ENCODE measurements at regions of chr15 and their contacts with region 1.

Region 1: GRCh38 chr15:94670438-94671034 is 439.2 kb downstream of the MCTP2 start:
- DNase-seq: peak in 1 of 2 donors; percentile 13
- ATAC-seq: peak in 5 of 8 donors; percentile 41 to 63 (median 54)
- H3K4me3 ChIP-seq: no peak overlapping the region
- H3K27ac ChIP-seq: peak overlapping the region in 4 of 10 donors; percentile 5 to 70 (median 29)
- H3K4me1 ChIP-seq: peaks cover 0 to 20% (median 8%) of the 10 kb centered on the region in 9 donors
- H3K27me3 ChIP-seq: peaks cover 0 to 5% (median 0%) of the 10 kb centered on the region in 7 donors
- CTCF ChIP-seq: peak; percentile 54 to 86 (median 76)

Region 2: GRCh38 chr15:94306700-94307650 is 363.6 kb before region 1 on chr15:
- intact Hi-C with region 1: no loop called
- DNase-seq: no peak
- ATAC-seq: peak in 1 of 8 donors; percentile 45
- H3K4me3 ChIP-seq: no peak overlapping the region
- H3K27ac ChIP-seq: peak overlapping the region in 1 of 10 donors; percentile 64
- H3K4me1 ChIP-seq: peaks cover 0 to 26% (median 0%) of the 10 kb centered on the region in 9 donors
- H3K27me3 ChIP-seq: peaks cover 0 to 11% (median 4%) of the 10 kb centered on the region in 7 donors
- CTCF ChIP-seq: no peak

Region 3: GRCh38 chr15:94610069-94610468 is 60.5 kb before region 1 on chr15:
- intact Hi-C with region 1: no loop called
- DNase-seq: no peak
- ATAC-seq: no peak
- H3K4me3 ChIP-seq: no peak overlapping the region
- H3K27ac ChIP-seq: no peak overlapping the region
- H3K4me1 ChIP-seq: peaks cover 0 to 23% (median 16%) of the 10 kb centered on the region in 9 donors
- H3K27me3 ChIP-seq: peaks cover 0 to 6% (median 0%) of the 10 kb centered on the region in 7 donors
- CTCF ChIP-seq: no peak

Region 4: DNA sequence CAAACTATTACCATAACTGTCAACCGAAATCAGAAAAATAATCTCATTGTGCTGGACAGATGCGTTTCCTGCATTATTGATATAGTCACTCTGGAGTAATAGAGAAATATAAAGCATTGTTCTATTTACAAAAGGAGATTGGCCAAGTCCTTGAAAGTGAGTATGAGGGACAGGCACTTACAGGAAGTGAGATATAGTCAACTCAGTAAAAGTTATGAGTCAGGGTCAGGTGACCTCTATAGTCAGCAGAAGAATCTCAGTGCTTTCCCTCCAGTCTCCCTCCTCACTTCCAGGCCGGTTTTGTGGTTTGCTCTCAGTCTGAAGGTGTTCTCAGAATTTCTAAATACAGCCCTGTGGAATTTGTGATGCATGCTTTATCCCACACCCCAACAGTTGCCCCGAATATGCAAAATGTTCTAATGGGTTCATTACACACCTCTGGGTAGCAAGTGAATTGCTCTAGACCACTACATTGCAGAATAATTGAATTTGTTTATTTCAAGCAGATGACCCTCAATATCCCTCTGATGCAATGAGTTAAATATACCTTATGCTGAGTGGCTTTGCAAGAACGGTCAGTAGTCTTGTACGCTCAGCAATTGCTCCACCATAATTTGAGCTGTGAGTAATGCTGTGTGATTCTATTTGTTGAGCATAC is 348.5 kb after region 1 on chr15:
- intact Hi-C with region 1: loop called in 4 of 10 experiments (anchors 5 to 10 kb)
- DNase-seq: no peak
- ATAC-seq: peak in 6 of 8 donors; percentile 14 to 85 (median 77)
- H3K4me3 ChIP-seq: no peak overlapping the region
- H3K27ac ChIP-seq: peak overlapping the region in 3 of 10 donors; percentile 28 to 45 (median 42)
- H3K4me1 ChIP-seq: peaks cover 0 to 35% (median 23%) of the 10 kb centered on the region in 9 donors
- H3K27me3 ChIP-seq: no peaks in the 10 kb centered on the region
- CTCF ChIP-seq: no peak

Region 5: GRCh38 chr15:95051861-95052260 is 381.3 kb after region 1 on chr15:
- intact Hi-C with region 1: no loop called
- DNase-seq: no peak
- ATAC-seq: no peak
- H3K4me3 ChIP-seq: no peak overlapping the region
- H3K27ac ChIP-seq: no peak overlapping the region
- H3K4me1 ChIP-seq: no peaks in the 10 kb centered on the region
- H3K27me3 ChIP-seq: no peaks in the 10 kb centered on the region
- CTCF ChIP-seq: no peak

Region 6: DNA sequence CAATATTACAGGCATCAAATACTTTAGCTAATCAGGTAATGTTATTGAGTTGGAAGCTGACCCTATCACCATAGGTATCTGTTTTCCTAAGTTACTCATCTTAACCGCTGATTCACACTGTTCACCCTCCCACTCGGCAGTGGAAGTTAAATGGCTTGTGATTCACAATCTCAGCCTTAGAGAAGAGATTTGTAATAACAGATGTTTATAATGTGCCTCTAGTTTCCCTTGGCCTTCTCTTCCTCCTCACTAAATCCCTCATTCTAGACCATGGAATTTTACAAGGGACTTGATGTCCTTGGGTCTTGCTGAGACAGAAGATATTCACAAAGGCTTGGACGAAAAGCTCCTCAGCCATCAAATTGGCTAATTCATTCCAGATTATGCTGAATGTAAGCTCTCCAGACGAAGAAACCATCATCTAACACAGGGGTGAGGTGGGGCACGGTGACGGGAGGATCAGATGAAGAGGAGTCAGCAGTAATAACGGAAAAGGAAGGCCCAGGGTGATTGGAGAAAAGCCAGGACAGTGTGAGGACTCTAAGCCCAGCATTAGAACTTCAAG is 492.5 kb after region 1 on chr15:
- intact Hi-C with region 1: no loop called
- DNase-seq: no peak
- ATAC-seq: peak in 2 of 8 donors; percentile 41 to 42
- H3K4me3 ChIP-seq: no peak overlapping the region
- H3K27ac ChIP-seq: peak overlapping the region in 4 of 10 donors; percentile 33 to 57 (median 39)
- H3K4me1 ChIP-seq: peaks cover 0 to 7% (median 0%) of the 10 kb centered on the region in 9 donors
- H3K27me3 ChIP-seq: no peaks in the 10 kb centered on the region
- CTCF ChIP-seq: no peak

Region 7: DNA sequence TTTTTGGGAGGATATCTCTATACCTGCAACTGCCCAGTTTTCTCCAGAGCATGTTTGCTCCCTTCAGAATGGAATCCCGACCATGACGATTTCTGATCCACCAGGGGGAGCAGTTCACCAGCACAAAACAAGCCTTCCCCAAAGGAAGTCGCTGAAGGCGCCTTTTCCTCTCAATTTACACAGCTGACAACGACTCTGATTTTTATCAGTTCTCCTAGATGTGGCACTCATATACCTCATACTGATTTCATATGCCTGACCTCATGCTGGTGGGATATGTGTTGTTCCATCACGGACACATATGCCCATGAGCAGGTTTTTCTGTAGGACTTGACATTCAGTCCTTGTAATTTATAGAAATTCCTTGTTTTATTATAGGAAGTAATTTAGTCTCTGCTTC is 589.0 kb after region 1 on chr15:
- intact Hi-C with region 1: loop called in 2 of 10 experiments (anchors 10 kb)
- DNase-seq: peak; percentile 28 to 77
- ATAC-seq: peak in 7 of 8 donors; percentile 72 to 93 (median 83)
- H3K4me3 ChIP-seq: no peak overlapping the region
- H3K27ac ChIP-seq: peak overlapping the region in 7 of 10 donors; percentile 16 to 58 (median 41)
- H3K4me1 ChIP-seq: peaks cover 0 to 25% (median 11%) of the 10 kb centered on the region in 9 donors
- H3K27me3 ChIP-seq: peaks cover 0 to 16% (median 4%) of the 10 kb centered on the region in 7 donors
- CTCF ChIP-seq: peak; percentile 67 to 90 (median 82)

Region 8: GRCh38 chr15:95291898-95292472 is 621.4 kb after region 1 on chr15:
- intact Hi-C with region 1: loop called in 2 of 10 experiments (anchors 5 to 10 kb)
- DNase-seq: no peak
- ATAC-seq: no peak
- H3K4me3 ChIP-seq: no peak overlapping the region
- H3K27ac ChIP-seq: no peak overlapping the region
- H3K4me1 ChIP-seq: peaks cover 0 to 32% (median 6%) of the 10 kb centered on the region in 9 donors
- H3K27me3 ChIP-seq: peaks cover 0 to 5% (median 2%) of the 10 kb centered on the region in 7 donors
- CTCF ChIP-seq: peak; percentile 37 to 72 (median 63)